Vagina (tissue), 2 donors: ENCODE measurements at regions of chr7 and their contacts with region 1.

Region 1: DNA sequence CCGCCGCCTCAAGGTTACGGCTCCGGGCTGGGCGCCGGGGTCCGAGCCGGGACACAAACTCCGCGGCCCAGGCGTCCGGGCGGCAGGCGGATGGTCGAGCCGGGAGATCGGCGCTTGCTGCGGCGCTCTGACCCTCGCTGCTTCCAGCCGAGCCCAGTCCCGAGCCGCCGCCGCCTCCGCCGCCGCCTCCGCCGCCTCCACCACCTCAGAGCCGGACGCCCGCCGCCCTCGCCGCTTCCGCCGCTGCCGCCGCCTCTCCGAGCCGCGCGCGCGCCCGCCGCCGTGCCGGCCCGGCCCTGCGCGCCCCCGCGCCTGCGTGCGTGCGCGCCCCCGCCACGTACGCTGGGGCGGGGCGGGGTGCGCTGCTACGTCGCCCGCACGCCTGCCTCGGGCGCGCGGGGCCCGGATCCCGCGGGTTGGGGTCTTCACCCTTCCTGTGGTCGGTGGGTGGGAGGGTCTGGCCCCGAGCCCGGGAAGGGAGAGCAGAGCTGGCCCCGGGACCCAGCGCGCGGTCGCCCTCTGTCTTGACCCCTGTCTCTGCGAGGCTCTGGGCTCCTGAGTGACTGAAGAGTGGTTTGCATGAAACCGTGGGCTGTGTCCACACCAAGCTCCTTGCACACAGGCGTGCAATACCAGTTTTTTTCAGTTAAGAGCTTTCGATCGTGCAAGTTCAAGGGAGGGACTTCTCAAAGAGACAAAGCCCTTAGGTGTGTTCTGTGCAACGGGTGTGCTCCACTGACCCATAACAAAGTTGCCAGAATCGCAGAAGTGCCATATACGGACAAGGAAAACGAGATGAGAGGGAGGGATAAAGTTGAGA is at the start of gene SMURF1:
- DNase-seq: no peak
- H3K4me3 ChIP-seq: peak within 1 kb of the TSS; percentile 97 to 99
- H3K27ac ChIP-seq: peak within 1 kb of the TSS; percentile 100
- H3K4me1 ChIP-seq: peaks cover 38% of the 10 kb centered on the region
- H3K27me3 ChIP-seq: no peaks in the 10 kb centered on the region
- CTCF ChIP-seq: no peak
- POLR2A ChIP-seq: no peak
- total RNA-seq, gene SMURF1: 30.0 TPM

Region 2: GRCh38 chr7:99036546-99037111 is 107.4 kb before region 1 on chr7:
- intact Hi-C with region 1: loop called (anchors 5 kb)
- DNase-seq: no peak
- H3K4me3 ChIP-seq: no peak overlapping the region
- H3K27ac ChIP-seq: no peak overlapping the region
- H3K4me1 ChIP-seq: peaks cover 10% of the 10 kb centered on the region
- H3K27me3 ChIP-seq: no peaks in the 10 kb centered on the region
- CTCF ChIP-seq: no peak
- POLR2A ChIP-seq: no peak

Region 3: DNA sequence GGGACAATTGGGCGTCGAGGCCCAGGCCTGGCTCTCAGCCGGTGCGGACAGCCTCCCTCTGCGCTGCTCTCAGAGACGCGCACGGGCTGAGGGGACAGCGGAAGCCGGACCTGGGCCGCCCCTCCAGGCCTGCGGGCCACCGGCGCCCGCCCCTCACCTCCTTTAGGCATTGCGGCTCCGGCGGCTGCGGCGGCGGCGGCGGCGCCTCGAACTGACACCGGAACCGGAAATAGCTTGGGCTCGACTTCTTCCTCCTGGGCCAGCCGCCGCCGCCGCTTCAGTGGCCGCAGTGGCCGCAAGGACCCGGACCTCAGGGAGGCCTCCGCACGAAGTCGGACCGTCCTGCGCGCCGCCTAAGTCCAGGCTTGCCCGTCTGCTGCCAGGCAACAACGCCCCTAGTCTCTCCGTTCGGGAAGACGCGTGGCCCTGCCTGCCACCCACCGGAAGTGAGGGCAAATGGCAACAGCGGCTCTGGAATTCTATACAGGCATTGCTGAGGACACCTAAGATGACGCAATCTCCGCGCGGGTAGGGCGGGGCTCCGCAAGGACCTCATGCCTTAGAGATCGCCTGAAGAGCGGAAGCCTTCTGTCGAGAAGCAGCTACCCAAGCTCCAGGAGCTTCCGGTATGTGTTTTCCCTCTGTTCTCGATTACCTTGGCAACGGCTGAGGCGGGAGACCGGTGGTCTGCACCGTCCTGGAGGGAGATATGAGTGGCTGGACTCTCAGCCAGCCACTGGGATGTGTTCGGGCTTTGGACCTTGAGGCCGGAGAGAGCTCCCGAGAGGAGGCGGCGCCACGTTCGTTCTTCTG is 264.5 kb after region 1 on chr7 and contains the starts of genes BUD31 and PDAP1:
- intact Hi-C with region 1: loop called (anchors 10 kb)
- DNase-seq: peak in 1 of 2 donors; percentile 98
- H3K4me3 ChIP-seq: peak within 1 kb of the TSS; percentile 94 to 99
- H3K27ac ChIP-seq: peak within 1 kb of the TSS; percentile 93
- H3K4me1 ChIP-seq: peaks cover 58% of the 10 kb centered on the region
- H3K27me3 ChIP-seq: no peaks in the 10 kb centered on the region
- CTCF ChIP-seq: no peak
- POLR2A ChIP-seq: peak in 1 of 2 donors; percentile 64
- total RNA-seq, gene BUD31: 52.3 TPM
- total RNA-seq, gene PDAP1: 48.1 TPM